CD8-positive, alpha-beta memory T cell (primary cell): ENCODE measurements at regions of chr1 and their contacts with region 1.

Region 1: DNA sequence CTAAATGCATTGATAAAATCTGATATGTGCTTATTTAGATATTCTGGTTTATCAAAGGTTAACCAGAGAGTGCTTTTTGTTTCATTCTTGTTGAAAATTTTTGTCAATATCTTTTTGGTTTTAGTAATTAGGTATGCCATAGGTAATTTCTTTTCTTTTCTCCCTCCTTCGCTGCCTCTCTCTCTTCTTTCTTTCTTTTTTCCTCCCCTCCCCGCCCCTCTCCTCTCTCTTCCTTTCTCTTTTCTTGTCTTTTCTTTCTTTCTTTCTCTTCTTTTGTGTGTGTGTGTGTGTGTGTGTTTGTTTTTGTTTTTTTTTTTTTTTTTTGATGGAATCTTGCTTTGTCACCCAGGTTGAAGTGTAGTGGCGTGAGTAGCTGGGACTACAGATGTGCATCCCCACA is 14.4 kb upstream of the MACF1 start:
- DNase-seq: no peak
- H3K4me3 ChIP-seq: no peak overlapping the region
- H3K4me3 Mint-ChIP-seq: no peak overlapping the region
- H3K27ac ChIP-seq: no peak overlapping the region
- H3K27ac Mint-ChIP-seq: peak overlapping the region in 4 of 8 donors; percentile 4 to 61 (median 22)
- H3K4me1 ChIP-seq: peaks cover 44% of the 10 kb centered on the region
- H3K4me1 Mint-ChIP-seq: peaks cover 46 to 66% (median 57%) of the 10 kb centered on the region in 3 donors
- H3K27me3 ChIP-seq: no peaks in the 10 kb centered on the region
- H3K27me3 Mint-ChIP-seq: no peaks in the 10 kb centered on the region

Region 2: GRCh38 chr1:39158327-39159086 is 31.6 kb before region 1 on chr1:
- CTCF ChIA-PET with region 1: no interaction called
- POLR2A ChIA-PET with region 1: no interaction called
- DNase-seq: no peak
- H3K4me3 ChIP-seq: no peak overlapping the region
- H3K4me3 Mint-ChIP-seq: no peak overlapping the region
- H3K27ac ChIP-seq: peak overlapping the region; percentile 33
- H3K27ac Mint-ChIP-seq: no peak overlapping the region
- H3K4me1 ChIP-seq: peaks cover 5% of the 10 kb centered on the region
- H3K4me1 Mint-ChIP-seq: peaks cover 0 to 4% (median 3%) of the 10 kb centered on the region in 3 donors
- H3K27me3 ChIP-seq: no peaks in the 10 kb centered on the region
- H3K27me3 Mint-ChIP-seq: peaks cover 7 to 9% of the 10 kb centered on the region in 2 donors

Region 3: DNA sequence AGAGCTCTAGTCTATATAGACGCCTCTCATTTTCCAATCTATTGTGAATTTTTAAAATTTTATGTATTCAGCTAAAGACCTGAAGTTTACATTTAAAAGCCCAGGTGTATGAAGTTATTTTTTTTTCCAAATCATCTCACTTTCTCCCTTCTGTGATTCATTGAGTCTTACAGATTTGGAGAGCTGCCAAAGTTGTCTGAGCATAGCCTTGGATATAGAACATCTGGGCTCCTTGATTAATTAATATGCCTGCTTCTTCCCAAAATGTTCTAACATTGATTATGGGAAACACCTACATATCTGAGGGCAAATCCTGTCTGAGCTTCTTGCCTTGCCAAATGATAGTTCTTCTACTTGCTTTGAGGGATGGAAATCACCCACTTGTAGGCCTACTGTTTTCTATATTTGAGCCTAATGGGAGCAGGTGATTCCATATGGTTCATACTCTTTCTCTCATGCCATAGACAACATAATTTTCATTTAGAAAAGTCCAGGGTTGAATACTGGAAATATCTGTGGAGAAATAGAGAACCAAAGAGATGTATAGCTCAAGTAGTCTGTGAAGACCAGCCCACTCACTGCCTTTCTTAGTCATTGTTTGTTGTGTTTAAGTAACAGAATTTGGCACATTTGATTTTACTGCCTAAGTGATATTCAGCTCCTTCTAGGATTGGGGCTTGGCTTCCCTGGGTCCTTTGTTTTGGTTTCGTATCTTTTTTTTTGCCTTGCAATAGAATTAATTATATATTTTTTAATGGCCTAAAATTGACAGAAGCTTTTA is 60.6 kb after region 1 on chr1:
- CTCF ChIA-PET with region 1: interaction called, 214 read pairs
- POLR2A ChIA-PET with region 1: interaction called, 4 read pairs
- DNase-seq: no peak
- H3K4me3 ChIP-seq: no peak overlapping the region
- H3K4me3 Mint-ChIP-seq: no peak overlapping the region
- H3K27ac ChIP-seq: no peak overlapping the region
- H3K27ac Mint-ChIP-seq: peak overlapping the region in 6 of 8 donors; percentile 41 to 74 (median 50)
- H3K4me1 ChIP-seq: no peaks in the 10 kb centered on the region
- H3K4me1 Mint-ChIP-seq: peaks cover 46 to 57% (median 52%) of the 10 kb centered on the region in 3 donors
- H3K27me3 ChIP-seq: no peaks in the 10 kb centered on the region
- H3K27me3 Mint-ChIP-seq: no peaks in the 10 kb centered on the region

Region 4: DNA sequence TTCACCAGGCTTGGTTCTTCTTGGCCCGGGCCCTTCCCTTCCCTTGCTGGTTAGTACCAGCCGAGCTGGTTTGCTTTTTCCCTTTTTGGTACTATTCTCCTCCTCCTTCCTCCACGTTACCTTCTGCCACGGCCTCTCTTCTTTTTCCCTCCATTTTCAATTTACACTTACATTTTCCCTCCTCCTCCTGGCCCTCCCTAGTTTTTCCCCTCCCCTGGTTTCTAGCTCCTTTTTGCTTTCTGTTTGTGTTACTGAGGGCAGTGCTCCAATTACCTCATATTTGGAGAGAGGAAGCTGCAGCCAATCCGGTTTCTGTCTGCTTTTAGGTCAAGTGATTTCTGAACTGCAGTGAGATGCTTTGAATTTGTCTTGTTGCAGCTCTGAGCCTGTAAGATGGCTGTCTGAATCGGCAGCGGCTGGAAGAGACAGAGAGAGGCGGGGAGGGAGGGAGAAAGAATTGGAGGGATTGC is 78.1 kb after region 1 on chr1:
- CTCF ChIA-PET with region 1: interaction called, 214 read pairs
- POLR2A ChIA-PET with region 1: no interaction called
- DNase-seq: peak in 1 of 5 donors; percentile 7
- H3K4me3 ChIP-seq: no peak overlapping the region
- H3K4me3 Mint-ChIP-seq: peak overlapping the region; percentile 12 to 78 (median 69)
- H3K27ac ChIP-seq: no peak overlapping the region
- H3K27ac Mint-ChIP-seq: peak overlapping the region; percentile 55 to 94 (median 87)
- H3K4me1 ChIP-seq: peaks cover 56% of the 10 kb centered on the region
- H3K4me1 Mint-ChIP-seq: peaks cover 80 to 91% (median 90%) of the 10 kb centered on the region in 3 donors
- H3K27me3 ChIP-seq: no peaks in the 10 kb centered on the region
- H3K27me3 Mint-ChIP-seq: no peaks in the 10 kb centered on the region